AG04449 (cell line): ENCODE measurements at regions of chr12 and their contacts with region 1.

Region 1: DNA sequence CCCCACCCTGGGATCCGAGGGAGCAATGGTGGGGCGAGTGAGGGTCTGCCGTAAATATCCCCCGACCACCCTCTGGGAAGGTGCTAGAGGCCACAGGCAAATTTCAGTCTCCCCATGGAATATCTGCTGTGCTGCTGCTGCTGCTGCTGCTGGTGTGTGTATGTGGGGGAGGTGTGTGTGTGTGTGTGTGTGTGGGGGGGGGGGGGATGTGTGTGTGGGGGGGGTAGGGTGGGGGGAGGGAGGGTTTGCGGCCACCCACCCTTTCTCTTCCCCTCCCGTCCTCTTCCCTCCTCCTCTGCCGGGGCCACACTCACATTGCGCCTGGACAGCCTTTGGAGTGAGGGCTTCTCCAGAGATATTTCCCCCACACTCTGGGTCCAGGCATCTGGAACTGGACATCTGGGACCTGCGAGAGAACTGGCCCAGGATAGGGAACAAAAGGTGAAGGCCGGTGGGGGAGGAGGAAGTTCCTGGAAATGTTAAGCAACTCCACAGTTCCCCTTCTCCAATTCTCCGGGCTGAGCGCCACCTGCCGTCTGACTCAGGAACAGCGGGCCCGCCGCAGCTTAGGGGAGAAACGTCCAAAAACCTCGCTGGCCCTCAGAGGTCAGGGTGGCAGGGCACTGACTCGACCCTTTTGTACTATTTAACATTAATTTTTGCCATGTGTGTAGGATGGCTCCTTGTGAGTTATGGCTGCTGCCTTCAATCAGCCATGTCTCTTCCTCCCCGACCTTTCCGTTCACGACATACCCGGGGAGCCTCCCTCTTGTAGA is at the start of gene C1RL:
- DNase-seq: peak; percentile 34
- H3K4me3 ChIP-seq: peak within 1 kb of the TSS; percentile 81
- CTCF ChIP-seq: peak; percentile 95

Region 2: GRCh38 chr12:6944381-6945186 is 164.4 kb before region 1 on chr12:
- CTCF ChIA-PET with region 1: interaction called, 97 read pairs
- POLR2A ChIA-PET with region 1: interaction called, 5 read pairs
- DNase-seq: no peak
- H3K4me3 ChIP-seq: peak overlapping the region; percentile 66
- CTCF ChIP-seq: peak; percentile 89

Region 3: DNA sequence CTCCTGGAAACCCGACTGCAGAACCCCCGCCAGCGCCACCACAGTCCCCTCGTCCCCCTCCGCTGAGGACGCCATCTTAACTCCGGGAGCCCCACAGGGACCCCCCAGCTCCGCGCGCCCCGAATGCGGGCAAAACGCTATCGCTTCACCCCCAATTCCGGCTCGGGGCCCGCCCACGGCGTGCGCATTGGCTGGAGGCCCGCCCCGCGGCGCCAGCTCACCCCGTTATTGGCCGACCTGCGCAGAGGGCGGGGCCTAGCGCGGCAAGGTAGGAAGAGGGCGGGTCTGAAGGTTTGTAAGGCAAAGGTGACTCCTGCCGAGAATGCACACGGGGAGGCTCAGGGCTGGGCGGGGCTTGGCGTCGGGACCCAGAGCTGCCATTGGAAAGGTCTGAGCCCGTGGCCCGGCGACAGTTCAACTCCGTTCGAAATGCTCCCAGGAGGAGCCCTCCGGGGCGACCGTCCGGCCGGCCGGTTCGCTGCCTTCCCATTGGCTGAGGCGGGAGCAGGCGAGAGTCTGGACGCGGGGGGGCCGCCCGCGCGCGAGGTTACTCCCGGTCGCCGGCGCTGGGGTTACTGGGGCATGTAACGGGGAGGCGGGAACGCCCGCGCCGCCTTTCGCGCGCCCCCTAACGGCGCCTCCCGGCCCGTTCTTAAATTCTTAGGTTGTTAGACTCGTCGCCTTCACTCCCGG is 90.5 kb before region 1 on chr12 and contains the start of gene LPCAT3:
- CTCF ChIA-PET with region 1: interaction called, 27 read pairs
- POLR2A ChIA-PET with region 1: interaction called, 3 read pairs
- DNase-seq: peak; percentile 50
- H3K4me3 ChIP-seq: peak within 1 kb of the TSS; percentile 89
- CTCF ChIP-seq: peak; percentile 90

Region 4: DNA sequence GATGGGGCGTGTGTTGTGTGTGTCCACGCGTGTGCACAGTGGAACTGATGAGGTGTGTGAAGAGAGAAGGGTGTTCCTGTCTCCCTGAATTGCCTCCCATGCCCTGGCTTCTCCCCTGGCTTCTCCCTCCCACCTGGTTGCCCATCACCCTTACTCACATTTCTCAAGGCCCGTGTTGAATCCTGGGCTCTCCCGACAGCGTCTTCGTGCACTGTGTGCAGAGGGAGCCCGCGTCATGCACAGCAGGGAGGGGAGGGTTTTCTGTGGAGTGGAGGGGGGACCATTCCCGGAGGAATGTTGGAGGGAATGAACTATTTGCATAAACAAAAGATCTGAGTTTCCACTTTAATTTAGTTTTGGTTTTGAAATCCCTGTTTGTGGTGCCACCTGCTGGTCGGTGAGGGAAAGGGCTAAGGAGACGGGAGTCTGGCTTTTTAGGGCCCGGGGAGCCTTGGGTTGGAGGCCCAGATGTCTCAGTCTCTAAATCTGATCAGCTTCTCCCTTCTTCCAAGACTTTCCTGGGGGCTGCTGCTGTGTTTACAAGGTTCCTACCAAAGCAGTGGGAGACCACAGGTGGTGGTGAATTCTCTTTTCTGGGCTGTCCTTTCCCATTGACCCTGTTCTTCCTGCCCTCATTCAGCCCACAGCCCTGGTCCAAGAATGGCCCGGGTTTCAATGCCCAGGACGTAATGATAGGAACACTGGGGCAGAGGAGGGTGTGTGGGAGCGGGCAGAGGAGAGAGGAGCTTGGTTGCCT is 16.6 kb before region 1 on chr12 and contains the start of gene C1R:
- CTCF ChIA-PET with region 1: interaction called, 96 read pairs
- POLR2A ChIA-PET with region 1: no interaction called
- DNase-seq: peak; percentile 60
- H3K4me3 ChIP-seq: peak within 1 kb of the TSS; percentile 66
- CTCF ChIP-seq: peak; percentile 74

Region 5: GRCh38 chr12:7188562-7189397 is 79.8 kb after region 1 on chr12:
- CTCF ChIA-PET with region 1: interaction called, 12 read pairs
- POLR2A ChIA-PET with region 1: no interaction called
- DNase-seq: no peak
- H3K4me3 ChIP-seq: peak overlapping the region; percentile 93
- CTCF ChIP-seq: peak; percentile 94